ENCODE measurements at regions of chr6 and their contacts with region 1.

Region 1: GRCh38 chr6:166333172-166333995 is 9.0 kb downstream of the SFT2D1 start:
- DNase-seq: peak; percentile 85
- H3K4me3 Mint-ChIP-seq: peak overlapping the region; percentile 59
- H3K27ac Mint-ChIP-seq: peak overlapping the region; percentile 51
- H3K4me1 Mint-ChIP-seq: peaks cover 42% of the 10 kb centered on the region
- H3K27me3 Mint-ChIP-seq: no peaks in the 10 kb centered on the region

Region 2: DNA sequence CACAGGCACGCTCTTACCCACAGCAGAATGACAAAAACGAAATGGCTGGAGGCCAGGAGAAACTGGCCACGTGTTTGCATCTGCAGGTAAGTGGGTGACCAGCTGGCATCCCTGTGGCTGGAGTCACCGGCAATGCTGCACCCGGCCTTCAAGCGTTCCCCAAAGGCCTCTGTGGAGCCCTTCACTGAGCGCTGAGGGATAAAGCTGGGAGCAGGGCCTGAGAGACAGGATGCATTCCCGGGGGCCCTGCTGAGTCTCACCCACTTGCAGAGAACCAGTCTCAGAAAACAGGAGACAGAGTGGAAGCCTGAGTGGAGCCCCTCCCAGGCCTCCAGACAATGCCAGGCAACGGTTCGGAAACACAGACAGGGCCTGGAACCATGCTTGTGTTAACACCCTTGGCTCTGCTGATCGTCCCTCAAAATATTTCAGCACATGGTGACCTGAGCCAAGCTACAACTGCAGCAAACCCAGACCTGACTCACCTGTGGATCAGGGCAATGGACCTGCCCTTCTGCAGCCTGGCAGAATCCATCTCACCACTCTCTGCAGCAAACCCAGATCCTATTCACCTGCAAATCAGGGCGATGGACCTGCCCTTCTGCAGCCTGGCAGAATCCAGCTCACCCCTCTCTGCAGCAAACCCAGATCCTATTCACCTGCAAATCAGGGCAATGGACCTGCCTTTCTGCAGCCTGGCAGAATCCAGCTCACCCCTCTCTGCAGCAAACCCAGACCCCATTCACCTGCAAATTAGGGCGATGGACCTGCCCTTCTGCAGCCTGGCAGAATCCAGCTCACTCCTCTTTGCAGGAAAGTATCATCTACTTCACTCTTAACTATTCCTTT is 205.5 kb before region 1 on chr6:
- intact Hi-C with region 1: no loop called
- DNase-seq: no peak
- H3K4me3 Mint-ChIP-seq: no peak overlapping the region
- H3K27ac Mint-ChIP-seq: no peak overlapping the region
- H3K4me1 Mint-ChIP-seq: no peaks in the 10 kb centered on the region
- H3K27me3 Mint-ChIP-seq: peaks cover 19% of the 10 kb centered on the region

Region 3: GRCh38 chr6:166308033-166308768 is 25.2 kb before region 1 on chr6 and contains the start of gene PRR18:
- intact Hi-C with region 1: loop called (anchors 2 kb)
- DNase-seq: no peak
- H3K4me3 Mint-ChIP-seq: no peak within 1 kb of the TSS
- H3K27ac Mint-ChIP-seq: no peak within 1 kb of the TSS
- H3K4me1 Mint-ChIP-seq: no peaks in the 10 kb centered on the region
- H3K27me3 Mint-ChIP-seq: peaks cover 57% of the 10 kb centered on the region
- total RNA-seq, gene PRR18: not detected in 2 replicates